ENCODE measurements at regions of chr13 and their contacts with region 1.

Region 1: GRCh38 chr13:93900731-93901130 is 578.8 kb downstream of the DCT start:
- DNase-seq: no peak
- ATAC-seq: no peak
- H3K4me3 ChIP-seq: no peak overlapping the region
- H3K4me3 Mint-ChIP-seq: no peak overlapping the region
- H3K27ac ChIP-seq: no peak overlapping the region
- H3K27ac Mint-ChIP-seq: no peak overlapping the region
- H3K4me1 ChIP-seq: no peaks in the 10 kb centered on the region
- H3K4me1 Mint-ChIP-seq: no peaks in the 10 kb centered on the region
- H3K27me3 ChIP-seq: no peaks in the 10 kb centered on the region
- H3K27me3 Mint-ChIP-seq: peaks cover 7 to 17% of the 10 kb centered on the region in 2 donors

Region 2: GRCh38 chr13:93794197-93794885 is 106.4 kb before region 1 on chr13:
- CTCF ChIA-PET with region 1: no interaction called
- POLR2A ChIA-PET with region 1: no interaction called
- DNase-seq: no peak
- ATAC-seq: no peak
- H3K4me3 ChIP-seq: no peak overlapping the region
- H3K4me3 Mint-ChIP-seq: no peak overlapping the region
- H3K27ac ChIP-seq: no peak overlapping the region
- H3K27ac Mint-ChIP-seq: no peak overlapping the region
- H3K4me1 ChIP-seq: no peaks in the 10 kb centered on the region
- H3K4me1 Mint-ChIP-seq: no peaks in the 10 kb centered on the region
- H3K27me3 ChIP-seq: no peaks in the 10 kb centered on the region
- H3K27me3 Mint-ChIP-seq: peaks cover 2 to 20% of the 10 kb centered on the region in 2 donors

Region 3: DNA sequence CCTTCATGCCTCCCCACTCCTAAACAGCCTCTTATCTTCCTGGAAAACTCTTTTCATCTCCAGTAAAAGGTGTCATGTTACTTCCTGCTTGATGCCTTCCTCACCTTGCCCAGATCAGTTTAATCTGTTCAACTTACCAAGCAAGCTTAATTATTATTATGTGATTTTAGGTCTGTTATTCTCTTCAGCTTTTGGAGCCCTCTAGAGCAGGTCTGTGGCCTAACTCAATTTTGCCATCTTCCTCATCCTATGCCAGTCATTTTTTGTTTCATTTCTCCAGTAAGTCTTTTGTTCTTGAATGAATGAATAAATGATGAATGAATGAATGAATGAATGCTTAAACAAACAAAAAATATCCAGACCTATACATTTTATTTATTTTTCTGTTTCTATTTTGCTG is 50.4 kb after region 1 on chr13:
- CTCF ChIA-PET with region 1: no interaction called
- POLR2A ChIA-PET with region 1: no interaction called
- DNase-seq: no peak
- ATAC-seq: no peak
- H3K4me3 ChIP-seq: no peak overlapping the region
- H3K4me3 Mint-ChIP-seq: no peak overlapping the region
- H3K27ac ChIP-seq: no peak overlapping the region
- H3K27ac Mint-ChIP-seq: no peak overlapping the region
- H3K4me1 ChIP-seq: no peaks in the 10 kb centered on the region
- H3K4me1 Mint-ChIP-seq: no peaks in the 10 kb centered on the region
- H3K27me3 ChIP-seq: peaks cover 0 to 2% of the 10 kb centered on the region in 2 experiments
- H3K27me3 Mint-ChIP-seq: no peaks in the 10 kb centered on the region

Region 4: GRCh38 chr13:94928127-94928775 is 1027.5 kb after region 1 on chr13:
- CTCF ChIA-PET with region 1: no interaction called
- POLR2A ChIA-PET with region 1: no interaction called
- DNase-seq: no peak
- ATAC-seq: no peak
- H3K4me3 ChIP-seq: no peak overlapping the region
- H3K4me3 Mint-ChIP-seq: no peak overlapping the region
- H3K27ac ChIP-seq: no peak overlapping the region
- H3K27ac Mint-ChIP-seq: no peak overlapping the region
- H3K4me1 ChIP-seq: no peaks in the 10 kb centered on the region
- H3K4me1 Mint-ChIP-seq: no peaks in the 10 kb centered on the region
- H3K27me3 ChIP-seq: peaks cover 0 to 4% of the 10 kb centered on the region in 2 experiments
- H3K27me3 Mint-ChIP-seq: peaks cover 2 to 21% of the 10 kb centered on the region in 2 donors

Region 5: GRCh38 chr13:95128045-95128643 is 1227.4 kb after region 1 on chr13:
- CTCF ChIA-PET with region 1: interaction called in 1 of 2 experiments, 10 read pairs
- POLR2A ChIA-PET with region 1: no interaction called
- DNase-seq: no peak
- ATAC-seq: no peak
- H3K4me3 ChIP-seq: no peak overlapping the region
- H3K4me3 Mint-ChIP-seq: no peak overlapping the region
- H3K27ac ChIP-seq: no peak overlapping the region
- H3K27ac Mint-ChIP-seq: no peak overlapping the region
- H3K4me1 ChIP-seq: no peaks in the 10 kb centered on the region
- H3K4me1 Mint-ChIP-seq: peaks cover 0 to 5% (median under 1%) of the 10 kb centered on the region in 3 donors
- H3K27me3 ChIP-seq: no peaks in the 10 kb centered on the region
- H3K27me3 Mint-ChIP-seq: no peaks in the 10 kb centered on the region